PC-9 (cell line): ENCODE measurements at regions of chr2 and their contacts with region 1.

Region 1: DNA sequence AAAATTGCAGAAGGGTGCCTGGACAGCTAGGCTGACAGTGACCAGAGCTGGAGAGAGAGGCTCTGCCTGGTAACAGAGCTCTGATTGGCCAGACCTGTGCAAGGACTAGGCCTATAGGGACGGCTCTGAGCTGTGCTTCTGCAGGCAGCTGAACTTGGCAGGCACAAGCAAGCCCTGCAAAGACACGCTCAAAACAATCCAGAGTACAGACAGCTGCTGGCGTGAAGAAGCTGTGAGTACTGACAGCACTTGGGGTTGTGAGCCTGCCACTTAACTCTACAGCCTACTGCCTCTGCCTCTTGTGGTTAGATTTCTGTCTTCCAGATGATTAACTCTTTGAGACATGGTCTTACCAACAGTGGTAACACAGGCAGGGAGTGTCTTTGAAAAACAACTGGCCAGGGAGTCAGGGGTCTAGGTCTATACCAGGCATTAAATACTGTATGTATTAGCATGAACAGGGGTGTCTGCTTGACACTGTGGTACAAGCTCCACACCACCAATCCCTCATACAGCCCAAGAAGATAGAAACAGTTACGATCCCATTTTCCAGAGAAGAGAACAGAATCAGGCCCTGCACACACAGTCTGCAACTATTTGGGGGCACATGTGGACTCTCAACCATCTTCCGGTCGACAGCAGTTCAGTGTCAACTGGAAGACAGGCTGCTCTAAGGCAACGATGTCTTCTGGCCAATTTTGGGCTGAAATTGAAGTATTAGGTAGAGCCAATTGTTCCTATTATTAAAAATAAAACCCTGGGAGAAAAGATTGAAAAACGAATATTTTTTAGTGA is 568.4 kb downstream of the TNS1 start:
- DNase-seq: peak; percentile 52 to 73
- H3K4me3 ChIP-seq: no peak overlapping the region
- H3K27ac ChIP-seq: no peak overlapping the region
- H3K4me1 ChIP-seq: no peaks in the 10 kb centered on the region
- H3K27me3 ChIP-seq: no peaks in the 10 kb centered on the region
- CTCF ChIP-seq: no peak

Region 2: GRCh38 chr2:217277646-217278398 is 156.6 kb before region 1 on chr2:
- CTCF ChIA-PET with region 1: no interaction called
- POLR2A ChIA-PET with region 1: no interaction called
- intact Hi-C with region 1: no loop called
- DNase-seq: peak; percentile 66 to 74
- H3K4me3 ChIP-seq: no peak overlapping the region
- H3K27ac ChIP-seq: peak overlapping the region; percentile 25; the same call in 1 of the 2 replicates
- H3K4me1 ChIP-seq: peaks cover 25% of the 10 kb centered on the region; the same call in 1 of the 2 replicates
- H3K27me3 ChIP-seq: no peaks in the 10 kb centered on the region
- CTCF ChIP-seq: no peak

Region 3: DNA sequence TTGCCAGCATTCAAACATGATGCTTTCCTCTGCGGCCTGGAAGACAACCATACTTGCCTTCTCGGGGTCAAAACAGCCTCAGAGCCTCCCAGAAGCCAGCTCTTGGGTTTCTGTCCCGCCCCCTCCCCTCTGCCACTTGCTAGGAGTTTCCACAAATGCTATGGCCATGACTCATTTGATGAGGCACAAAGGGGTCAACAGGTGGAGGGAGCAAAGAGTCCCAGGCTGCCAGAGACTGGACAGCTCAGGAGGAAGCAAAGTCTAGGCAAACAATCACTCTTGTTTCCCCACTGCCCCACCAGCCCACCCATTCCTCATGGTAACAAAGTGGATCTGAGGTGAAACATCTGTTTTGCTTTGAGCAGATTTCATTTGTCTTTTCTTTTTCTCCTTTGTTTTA is 17.3 kb after region 1 on chr2:
- CTCF ChIA-PET with region 1: no interaction called
- POLR2A ChIA-PET with region 1: no interaction called
- intact Hi-C with region 1: loop called (anchors 2 kb)
- DNase-seq: peak; percentile 57 to 78
- H3K4me3 ChIP-seq: no peak overlapping the region
- H3K27ac ChIP-seq: peak overlapping the region; percentile 58
- H3K4me1 ChIP-seq: peaks cover 18% of the 10 kb centered on the region
- H3K27me3 ChIP-seq: no peaks in the 10 kb centered on the region
- CTCF ChIP-seq: no peak